Prostate gland (tissue), 2 donors: ENCODE measurements at regions of chr20 and their contacts with region 1.

Region 1: DNA sequence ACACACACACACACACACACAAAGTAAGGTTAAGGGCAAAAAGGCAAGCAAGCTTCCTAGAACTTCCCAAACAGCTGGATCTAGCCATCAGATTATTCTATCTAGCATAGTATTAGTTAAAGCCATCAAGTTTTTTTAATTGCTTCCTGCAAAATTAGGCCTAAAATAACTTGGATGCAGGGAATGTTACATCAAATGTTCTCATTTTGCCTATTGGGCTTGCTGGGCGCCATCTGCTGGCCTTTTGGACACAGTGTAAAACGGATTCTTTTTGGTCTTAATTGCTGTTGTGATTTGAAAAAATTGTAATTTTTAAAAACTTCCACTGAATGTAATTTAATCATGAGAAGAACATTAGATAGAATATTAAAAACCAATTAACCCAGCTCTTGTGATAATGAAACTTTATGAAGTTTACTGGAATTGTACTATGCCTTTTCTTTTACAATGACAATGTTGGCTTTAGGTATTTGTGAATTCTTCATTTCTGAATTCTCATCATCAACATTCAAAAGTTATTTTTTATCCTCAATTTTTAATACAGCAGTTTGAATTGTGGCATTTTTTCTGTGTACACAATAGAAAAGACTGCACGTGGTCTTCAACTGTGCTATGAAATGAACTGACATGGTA is 6.8 kb downstream of the MKKS start:
- DNase-seq: peak; percentile 37
- H3K4me3 ChIP-seq: no peak overlapping the region
- H3K27ac ChIP-seq: no peak overlapping the region
- H3K4me1 ChIP-seq: peaks cover 2% of the 10 kb centered on the region
- H3K27me3 ChIP-seq: no peaks in the 10 kb centered on the region
- CTCF ChIP-seq: peak; percentile 22 to 77 (median 67)
- POLR2A ChIP-seq: no peak

Region 2: DNA sequence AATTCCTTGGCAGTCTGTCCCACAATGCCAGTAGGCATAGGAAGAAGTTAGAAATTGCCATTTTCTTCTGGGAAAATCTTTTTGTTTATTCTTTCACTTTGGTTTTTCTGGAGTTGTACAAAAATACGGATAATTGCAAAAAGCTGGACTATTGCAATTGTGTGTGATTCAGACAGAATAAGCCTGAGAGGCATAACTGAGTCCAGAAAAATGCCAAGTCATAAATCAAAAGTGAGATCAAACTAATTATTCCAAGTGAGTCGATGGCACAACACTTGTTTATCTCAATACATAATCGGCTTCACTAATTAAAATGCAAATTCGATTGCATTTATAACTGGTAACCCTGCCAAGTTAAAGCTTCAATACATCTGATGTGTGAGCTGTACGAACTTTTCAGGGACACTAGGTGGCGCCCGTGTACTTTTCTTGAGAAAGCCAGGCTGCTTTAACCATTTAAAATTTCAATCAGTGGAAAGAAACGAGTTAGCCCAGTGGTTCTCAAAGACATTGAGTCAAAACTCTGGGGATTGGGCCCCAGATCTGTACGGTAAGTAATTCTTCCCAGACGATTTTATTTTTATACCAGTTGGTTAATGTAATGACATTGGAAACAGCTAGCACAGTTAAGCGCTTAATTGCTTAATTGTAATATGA is 810.2 kb before region 1 on chr20:
- intact Hi-C with region 1: loop called (anchors 5 kb)
- DNase-seq: peak; percentile 65
- H3K4me3 ChIP-seq: no peak overlapping the region
- H3K27ac ChIP-seq: no peak overlapping the region
- H3K4me1 ChIP-seq: no peaks in the 10 kb centered on the region
- H3K27me3 ChIP-seq: no peaks in the 10 kb centered on the region
- CTCF ChIP-seq: peak in 3 of 4 experiments; percentile 74 to 77 (median 76)
- POLR2A ChIP-seq: no peak

Region 3: GRCh38 chr20:9978397-9979004 is 448.7 kb before region 1 on chr20:
- intact Hi-C with region 1: loop called (anchors 5 kb)
- DNase-seq: peak; percentile 63
- H3K4me3 ChIP-seq: no peak overlapping the region
- H3K27ac ChIP-seq: no peak overlapping the region
- H3K4me1 ChIP-seq: no peaks in the 10 kb centered on the region
- H3K27me3 ChIP-seq: no peaks in the 10 kb centered on the region
- CTCF ChIP-seq: peak; percentile 37 to 87 (median 70)
- POLR2A ChIP-seq: no peak

Region 4: GRCh38 chr20:10090588-10091166 is 336.5 kb before region 1 on chr20:
- intact Hi-C with region 1: loop called (anchors 5 kb)
- DNase-seq: peak; percentile 38
- H3K4me3 ChIP-seq: no peak overlapping the region
- H3K27ac ChIP-seq: no peak overlapping the region
- H3K4me1 ChIP-seq: no peaks in the 10 kb centered on the region
- H3K27me3 ChIP-seq: no peaks in the 10 kb centered on the region
- CTCF ChIP-seq: peak; percentile 44 to 68 (median 58)
- POLR2A ChIP-seq: no peak

Region 5: GRCh38 chr20:10696650-10697049 is 269.5 kb after region 1 on chr20:
- intact Hi-C with region 1: no loop called
- DNase-seq: no peak
- H3K4me3 ChIP-seq: no peak overlapping the region
- H3K27ac ChIP-seq: no peak overlapping the region
- H3K4me1 ChIP-seq: no peaks in the 10 kb centered on the region
- H3K27me3 ChIP-seq: no peaks in the 10 kb centered on the region
- CTCF ChIP-seq: peak in 2 of 4 experiments; percentile 18 to 43
- POLR2A ChIP-seq: no peak